ENCODE measurements at regions of chr14 and their contacts with region 1.

Region 1: DNA sequence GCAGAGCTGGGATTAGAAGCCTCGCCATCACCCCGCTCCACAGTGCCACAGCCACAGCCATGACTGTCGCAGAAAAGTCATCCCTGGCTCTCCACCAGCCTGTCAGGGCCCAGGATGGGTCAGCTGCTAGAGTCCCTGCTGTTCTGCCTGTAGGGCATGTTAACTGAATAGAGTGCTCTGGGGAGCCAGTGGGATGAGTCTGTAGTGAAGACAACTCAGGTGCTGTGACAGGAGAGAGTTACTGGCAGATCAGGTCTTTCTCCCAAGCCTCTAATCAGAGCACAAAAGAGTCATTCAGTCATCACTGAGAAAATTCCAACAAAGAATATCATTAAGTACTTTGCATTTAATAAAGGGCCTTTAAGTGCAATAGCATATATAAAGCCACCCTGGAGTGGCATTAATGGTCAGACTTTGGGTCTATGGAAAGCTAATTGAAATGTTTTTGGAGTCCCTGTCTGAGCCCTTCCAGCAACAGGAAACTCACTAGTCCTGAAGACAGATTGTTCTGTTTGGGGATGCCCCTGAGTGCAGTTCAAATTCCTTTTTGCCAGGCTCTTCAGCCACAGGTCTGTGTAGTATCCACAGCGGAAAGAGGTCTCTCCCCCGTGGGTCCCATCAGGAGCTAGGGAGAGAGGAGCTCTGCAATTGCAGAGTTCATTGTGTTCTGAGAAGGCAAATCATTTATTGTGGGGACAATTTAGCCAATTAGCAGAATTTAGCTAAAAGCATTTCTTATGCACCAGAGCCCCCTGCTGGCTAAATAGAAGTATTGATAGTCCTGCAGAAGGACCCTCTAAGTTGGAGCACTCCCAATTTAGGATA is 45.2 kb upstream of the C14orf132 start:
- DNase-seq: peak in 1 of 2 donors; percentile 16
- ATAC-seq: no peak
- H3K4me3 ChIP-seq: no peak overlapping the region
- H3K27ac ChIP-seq: no peak overlapping the region
- H3K4me1 ChIP-seq: no peaks in the 10 kb centered on the region
- H3K27me3 ChIP-seq: peaks cover 0 to 50% (median 36%) of the 10 kb centered on the region in 7 donors
- CTCF ChIP-seq: peak; percentile 58 to 84 (median 81)

Region 2: GRCh38 chr14:95424529-95424928 is 569.5 kb before region 1 on chr14:
- intact Hi-C with region 1: loop called in 1 of 10 experiments (anchors 10 kb)
- DNase-seq: no peak
- ATAC-seq: peak in 4 of 8 donors; percentile 20 to 53 (median 42)
- H3K4me3 ChIP-seq: no peak overlapping the region
- H3K27ac ChIP-seq: no peak overlapping the region
- H3K4me1 ChIP-seq: peaks cover 0 to 4% (median 0%) of the 10 kb centered on the region in 9 donors
- H3K27me3 ChIP-seq: no peaks in the 10 kb centered on the region
- CTCF ChIP-seq: no peak

Region 3: GRCh38 chr14:95442633-95443021 is 551.4 kb before region 1 on chr14:
- intact Hi-C with region 1: loop called in 6 of 10 experiments (anchors 5 to 10 kb)
- DNase-seq: peak; percentile 79 to 81
- ATAC-seq: peak; percentile 93 to 97 (median 94)
- H3K4me3 ChIP-seq: no peak overlapping the region
- H3K27ac ChIP-seq: no peak overlapping the region
- H3K4me1 ChIP-seq: peaks cover 0 to 9% (median 0%) of the 10 kb centered on the region in 9 donors
- H3K27me3 ChIP-seq: no peaks in the 10 kb centered on the region
- CTCF ChIP-seq: peak; percentile 75 to 95 (median 88)

Region 4: DNA sequence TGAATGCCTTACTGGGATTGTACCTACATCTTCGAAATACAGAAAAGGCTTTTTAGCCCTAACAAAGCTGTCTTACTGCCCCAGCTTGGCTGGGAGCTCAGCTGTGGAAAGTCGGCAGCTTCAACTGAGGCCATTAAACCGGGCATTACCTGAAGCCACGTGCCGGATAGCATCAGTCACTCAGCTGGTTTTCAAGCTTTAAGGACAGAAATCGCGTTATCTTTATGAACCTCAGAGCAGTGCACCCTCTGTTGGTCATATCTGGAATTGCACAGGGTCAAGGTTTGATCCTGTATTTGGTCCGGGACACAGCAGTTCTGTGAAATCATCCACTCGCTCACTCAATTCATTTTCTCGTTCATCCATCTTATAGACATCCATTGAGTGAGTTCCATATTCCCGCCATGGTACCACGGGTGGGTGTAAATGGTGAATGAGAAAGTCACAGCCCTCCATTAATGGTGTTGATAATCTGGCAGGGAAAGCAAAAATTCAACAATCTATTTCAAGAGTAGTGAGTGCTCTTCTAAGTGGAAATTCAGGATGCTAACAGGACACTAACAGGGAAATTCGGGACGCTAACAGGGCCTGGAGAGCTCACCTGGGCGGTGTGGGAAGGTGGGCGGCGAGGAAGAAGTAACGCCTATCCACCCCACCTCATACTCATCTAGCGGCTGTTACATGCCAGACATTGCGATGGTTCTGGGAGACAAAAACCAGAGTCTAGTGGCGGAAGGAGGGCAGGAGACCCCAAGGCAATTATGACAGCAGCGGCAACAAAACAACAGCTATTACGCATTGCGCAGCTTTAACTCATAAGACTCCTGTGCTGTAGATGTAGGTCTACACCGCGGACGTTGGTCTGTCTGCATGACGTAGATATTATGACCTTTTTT is 219.5 kb before region 1 on chr14:
- intact Hi-C with region 1: loop called in 1 of 10 experiments (anchors 10 kb)
- DNase-seq: peak in 1 of 2 donors; percentile 33
- ATAC-seq: no peak
- H3K4me3 ChIP-seq: no peak overlapping the region
- H3K27ac ChIP-seq: no peak overlapping the region
- H3K4me1 ChIP-seq: no peaks in the 10 kb centered on the region
- H3K27me3 ChIP-seq: peaks cover 0 to 24% (median 10%) of the 10 kb centered on the region in 7 donors
- CTCF ChIP-seq: peak; percentile 57 to 92 (median 85)

Region 5: GRCh38 chr14:95814363-95815225 is 179.4 kb before region 1 on chr14:
- intact Hi-C with region 1: no loop called
- DNase-seq: no peak
- ATAC-seq: no peak
- H3K4me3 ChIP-seq: no peak overlapping the region
- H3K27ac ChIP-seq: no peak overlapping the region
- H3K4me1 ChIP-seq: no peaks in the 10 kb centered on the region
- H3K27me3 ChIP-seq: peaks cover 0 to 74% (median 34%) of the 10 kb centered on the region in 7 donors
- CTCF ChIP-seq: no peak

Region 6: DNA sequence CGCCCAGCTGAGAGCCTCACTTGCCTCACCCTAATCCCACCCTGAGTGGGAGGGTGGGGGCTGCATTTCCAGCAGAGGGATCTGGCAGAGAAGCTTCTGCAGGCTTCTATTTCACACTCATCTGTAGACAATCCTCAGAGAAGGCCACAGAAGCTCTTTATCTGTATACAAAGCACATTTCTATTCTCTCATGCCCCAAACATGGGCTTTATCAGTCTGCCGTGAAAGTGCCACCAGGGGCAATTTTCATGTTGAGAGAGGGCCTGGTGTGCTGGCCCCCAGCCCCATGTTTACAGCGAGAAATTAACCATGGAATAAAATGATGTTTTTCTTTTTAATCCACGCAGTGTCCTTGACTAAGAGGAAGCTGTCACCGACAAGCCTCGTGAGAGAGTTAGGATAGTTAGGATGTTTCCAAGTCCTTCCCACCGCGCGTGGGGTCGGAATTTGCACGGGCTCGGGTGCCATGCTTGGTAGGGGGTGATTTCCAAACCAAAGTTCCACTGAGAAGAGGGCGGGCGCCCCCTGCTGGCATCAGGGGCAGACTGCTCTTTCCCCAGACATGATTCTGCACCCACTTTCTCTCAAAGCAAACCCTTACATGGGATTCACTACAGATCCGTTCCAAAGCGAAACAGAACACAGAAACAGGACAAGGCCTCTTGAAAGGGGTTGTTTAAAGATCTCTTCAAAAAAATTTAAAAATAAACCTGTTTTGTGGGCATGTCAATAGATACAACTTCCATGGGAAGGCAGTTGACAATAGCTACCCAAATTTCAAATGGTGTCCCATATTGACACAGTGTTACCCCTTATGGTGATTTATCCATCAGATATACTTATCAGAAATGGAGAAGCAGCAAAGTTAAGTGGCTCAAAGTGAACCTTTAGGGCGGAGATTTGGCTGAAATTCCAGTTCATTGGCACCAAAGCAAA is 281.5 kb after region 1 on chr14:
- intact Hi-C with region 1: loop called in 9 of 10 experiments (anchors 2 to 10 kb)
- DNase-seq: peak; percentile 52 to 73
- ATAC-seq: peak in 6 of 8 donors; percentile 50 to 77 (median 65)
- H3K4me3 ChIP-seq: no peak overlapping the region
- H3K27ac ChIP-seq: peak overlapping the region in 1 of 10 donors; percentile 29
- H3K4me1 ChIP-seq: peaks cover 0 to 10% (median 4%) of the 10 kb centered on the region in 9 donors
- H3K27me3 ChIP-seq: no peaks in the 10 kb centered on the region
- CTCF ChIP-seq: peak; percentile 75 to 98 (median 90)